K562 (cell line): ENCODE measurements at regions of chr22 and their contacts with region 1.

Region 1: GRCh38 chr22:32985899-32986765 is 72.0 kb downstream of the SYN3 start:
- DNase-seq: peak; percentile 67 to 70 (median 67)
- ATAC-seq: peak; percentile 99
- H3K4me3 ChIP-seq: no peak overlapping the region
- H3K27ac ChIP-seq: no peak overlapping the region
- H3K4me1 ChIP-seq: peaks cover 0 to 4% of the 10 kb centered on the region in 2 experiments; a peak in 1 of 5 replicates
- H3K27me3 ChIP-seq: no peaks in the 10 kb centered on the region
- CTCF ChIP-seq: peak; percentile 77 to 79 (median 78)
- EP300 ChIP-seq: no peak
- POLR2A ChIP-seq: no peak
- RAD21 ChIP-seq: peak; percentile 63 to 82

Region 2: GRCh38 chr22:32660292-32660691 is 325.8 kb before region 1 on chr22:
- CTCF ChIA-PET with region 1: no interaction called
- POLR2A ChIA-PET with region 1: no interaction called
- in situ Hi-C with region 1: loop called (anchors 10 kb)
- intact Hi-C with region 1: loop called (anchors 10 kb)
- DNase-seq: peak; percentile 63 to 69 (median 68)
- ATAC-seq: peak; percentile 88
- H3K4me3 ChIP-seq: no peak overlapping the region
- H3K27ac ChIP-seq: no peak overlapping the region
- H3K4me1 ChIP-seq: no peaks in the 10 kb centered on the region; a peak in 1 of 5 replicates
- H3K27me3 ChIP-seq: peaks cover 0 to 9% of the 10 kb centered on the region in 2 experiments; a peak in 4 of 5 replicates
- CTCF ChIP-seq: peak; percentile 76 to 80 (median 76)
- EP300 ChIP-seq: no peak
- POLR2A ChIP-seq: no peak
- RAD21 ChIP-seq: peak; percentile 82 to 86

Region 3: DNA sequence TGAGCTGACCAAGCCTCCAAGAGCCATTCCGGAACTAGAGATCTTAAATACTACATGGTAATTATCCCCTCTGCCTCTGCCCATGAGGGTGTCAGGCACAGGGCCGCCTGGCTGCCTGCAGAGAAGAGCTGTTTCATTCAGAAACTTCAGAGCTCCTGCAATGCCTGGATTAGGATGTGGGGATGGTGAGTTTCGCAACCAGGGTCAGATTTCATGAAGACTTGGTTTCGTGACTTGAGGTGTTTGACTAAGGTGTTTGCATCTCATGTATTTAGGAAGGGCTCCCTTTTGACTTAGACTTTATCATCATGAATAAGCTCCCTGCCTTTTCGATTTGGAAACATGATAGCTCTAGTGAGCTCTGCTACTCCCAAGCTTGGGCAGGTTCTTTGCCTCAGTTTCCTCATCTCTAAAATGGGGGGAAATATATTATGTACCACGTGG is 175.5 kb before region 1 on chr22:
- CTCF ChIA-PET with region 1: no interaction called
- POLR2A ChIA-PET with region 1: no interaction called
- in situ Hi-C with region 1: no loop called
- intact Hi-C with region 1: loop called (anchors 10 kb)
- DNase-seq: no peak
- ATAC-seq: no peak
- H3K4me3 ChIP-seq: no peak overlapping the region
- H3K27ac ChIP-seq: no peak overlapping the region
- H3K4me1 ChIP-seq: no peaks in the 10 kb centered on the region
- H3K27me3 ChIP-seq: peaks cover 0 to 5% of the 10 kb centered on the region in 2 experiments; a peak in 1 of 5 replicates
- CTCF ChIP-seq: no peak
- EP300 ChIP-seq: no peak
- POLR2A ChIP-seq: no peak
- RAD21 ChIP-seq: no peak

Region 4: GRCh38 chr22:32836280-32837123 is 149.6 kb before region 1 on chr22:
- CTCF ChIA-PET with region 1: no interaction called
- POLR2A ChIA-PET with region 1: interaction called, 3 read pairs
- in situ Hi-C with region 1: loop called (anchors 5 kb)
- intact Hi-C with region 1: no loop called
- DNase-seq: peak; percentile 20 to 54 (median 42)
- ATAC-seq: peak; percentile 55; the same call in 2 of the 3 replicates
- H3K4me3 ChIP-seq: no peak overlapping the region
- H3K27ac ChIP-seq: no peak overlapping the region
- H3K4me1 ChIP-seq: no peaks in the 10 kb centered on the region
- H3K27me3 ChIP-seq: no peaks in the 10 kb centered on the region; a peak in 1 of 5 replicates
- CTCF ChIP-seq: peak; percentile 30 to 60 (median 54); a peak in 5 of 6 replicates
- EP300 ChIP-seq: no peak
- POLR2A ChIP-seq: no peak
- RAD21 ChIP-seq: peak in 1 of 2 experiments; percentile 27; a peak in 2 of 4 replicates

Region 5: GRCh38 chr22:32926600-32926999 is 59.5 kb before region 1 on chr22:
- CTCF ChIA-PET with region 1: no interaction called
- POLR2A ChIA-PET with region 1: no interaction called
- in situ Hi-C with region 1: no loop called
- intact Hi-C with region 1: loop called (anchors 2 kb)
- DNase-seq: peak; percentile 19 to 48 (median 27)
- ATAC-seq: peak; percentile 69; the same call in 2 of the 3 replicates
- H3K4me3 ChIP-seq: no peak overlapping the region
- H3K27ac ChIP-seq: no peak overlapping the region
- H3K4me1 ChIP-seq: no peaks in the 10 kb centered on the region; a peak in 1 of 5 replicates
- H3K27me3 ChIP-seq: no peaks in the 10 kb centered on the region; a peak in 1 of 5 replicates
- CTCF ChIP-seq: peak; percentile 48 to 60 (median 57)
- EP300 ChIP-seq: no peak
- POLR2A ChIP-seq: no peak
- RAD21 ChIP-seq: peak; percentile 41 to 43

Region 6: DNA sequence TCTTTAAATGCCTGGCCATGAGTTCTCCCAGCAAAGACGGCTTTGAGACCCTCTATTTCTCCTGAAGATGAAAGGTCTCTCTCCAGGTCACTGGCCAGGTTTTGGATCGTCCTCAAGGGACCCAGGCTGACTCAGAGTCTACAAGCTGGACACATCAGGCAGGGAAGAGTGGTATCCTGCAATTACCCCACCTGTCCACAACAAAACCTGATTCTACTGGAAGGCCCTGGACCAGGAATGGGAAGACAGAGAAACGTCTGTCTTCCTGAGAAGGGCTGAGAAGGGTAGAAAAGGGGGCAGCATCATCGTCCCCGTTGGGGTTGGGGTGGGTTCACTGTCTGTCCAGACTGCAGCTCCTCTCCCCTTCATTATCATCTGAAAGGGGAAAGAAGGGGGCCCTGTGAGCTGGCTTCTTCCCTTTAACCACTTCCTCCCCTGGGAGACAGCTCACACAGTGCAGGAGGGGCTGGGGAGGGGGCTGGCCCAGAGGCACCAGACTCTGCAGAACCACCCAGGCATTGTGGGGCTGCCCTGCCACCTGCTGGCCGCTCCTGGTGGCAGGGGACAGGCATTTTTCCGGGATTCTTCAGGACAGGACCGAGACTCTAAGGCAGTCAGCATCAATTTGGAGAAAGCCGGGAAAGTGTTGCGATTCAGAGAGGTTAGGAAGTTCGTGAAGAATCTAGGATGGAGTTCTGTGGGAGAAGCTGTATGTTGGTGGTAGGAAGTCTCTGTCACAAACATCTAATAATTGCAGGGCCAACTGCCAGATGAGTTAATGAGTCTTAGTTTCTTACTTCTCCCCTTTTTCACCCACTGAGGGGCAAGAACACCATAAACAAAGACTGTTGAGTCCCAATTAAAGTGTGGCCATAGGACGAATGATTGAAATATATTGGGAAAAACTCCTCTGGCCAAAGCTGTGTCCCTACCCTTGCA is 14.5 kb after region 1 on chr22:
- CTCF ChIA-PET with region 1: no interaction called
- POLR2A ChIA-PET with region 1: no interaction called
- in situ Hi-C with region 1: no loop called
- intact Hi-C with region 1: no loop called
- DNase-seq: peak; percentile 37 to 56 (median 51)
- ATAC-seq: peak; percentile 91
- H3K4me3 ChIP-seq: no peak overlapping the region
- H3K27ac ChIP-seq: no peak overlapping the region
- H3K4me1 ChIP-seq: no peaks in the 10 kb centered on the region
- H3K27me3 ChIP-seq: peaks cover 0 to 8% of the 10 kb centered on the region in 2 experiments; a peak in 2 of 5 replicates
- CTCF ChIP-seq: peak; percentile 71 to 78 (median 75)
- EP300 ChIP-seq: no peak
- POLR2A ChIP-seq: no peak
- RAD21 ChIP-seq: peak; percentile 67 to 82

Region 7: DNA sequence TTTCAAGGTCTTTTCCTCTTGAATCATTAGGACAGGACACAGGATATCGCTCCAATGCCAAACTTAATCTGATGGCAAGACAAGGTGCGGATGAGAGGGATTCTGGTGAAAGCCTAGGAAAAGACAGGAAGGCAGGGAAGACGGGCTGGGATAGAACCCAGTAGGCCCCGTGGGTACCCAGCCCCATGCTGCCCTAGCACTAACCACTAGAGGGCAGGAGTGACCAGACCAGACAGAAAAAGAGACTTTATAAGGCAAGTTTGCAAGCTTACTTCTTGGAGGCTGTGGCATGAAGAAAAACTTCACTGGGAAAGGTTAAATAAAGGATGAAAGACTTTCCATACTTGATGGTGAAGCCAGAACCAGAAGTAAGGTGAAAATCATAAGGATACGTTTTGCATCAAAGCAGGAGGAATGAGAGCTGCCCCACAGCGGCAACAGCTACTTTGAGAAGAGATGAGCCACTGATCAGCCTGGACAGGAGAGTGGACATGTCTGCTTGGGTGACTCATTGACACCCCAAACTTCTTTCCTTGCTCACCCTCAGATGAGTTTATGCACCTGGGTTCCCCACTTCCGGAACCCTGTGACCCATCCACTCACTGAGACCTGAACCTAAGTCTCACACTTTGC is 32.2 kb after region 1 on chr22:
- CTCF ChIA-PET with region 1: no interaction called
- POLR2A ChIA-PET with region 1: no interaction called
- in situ Hi-C with region 1: no loop called
- intact Hi-C with region 1: no loop called
- DNase-seq: peak; percentile 45 to 60 (median 50)
- ATAC-seq: peak; percentile 87
- H3K4me3 ChIP-seq: no peak overlapping the region
- H3K27ac ChIP-seq: no peak overlapping the region
- H3K4me1 ChIP-seq: no peaks in the 10 kb centered on the region
- H3K27me3 ChIP-seq: 0 out of 5 replicates have a peak, but pooled peaks cover 0 to 2% of the 10 kb centered on the region in 2 experiments
- CTCF ChIP-seq: peak; percentile 66 to 78 (median 71)
- EP300 ChIP-seq: no peak
- POLR2A ChIP-seq: no peak
- RAD21 ChIP-seq: peak; percentile 13 to 61; a peak in 3 of 4 replicates

Region 8: DNA sequence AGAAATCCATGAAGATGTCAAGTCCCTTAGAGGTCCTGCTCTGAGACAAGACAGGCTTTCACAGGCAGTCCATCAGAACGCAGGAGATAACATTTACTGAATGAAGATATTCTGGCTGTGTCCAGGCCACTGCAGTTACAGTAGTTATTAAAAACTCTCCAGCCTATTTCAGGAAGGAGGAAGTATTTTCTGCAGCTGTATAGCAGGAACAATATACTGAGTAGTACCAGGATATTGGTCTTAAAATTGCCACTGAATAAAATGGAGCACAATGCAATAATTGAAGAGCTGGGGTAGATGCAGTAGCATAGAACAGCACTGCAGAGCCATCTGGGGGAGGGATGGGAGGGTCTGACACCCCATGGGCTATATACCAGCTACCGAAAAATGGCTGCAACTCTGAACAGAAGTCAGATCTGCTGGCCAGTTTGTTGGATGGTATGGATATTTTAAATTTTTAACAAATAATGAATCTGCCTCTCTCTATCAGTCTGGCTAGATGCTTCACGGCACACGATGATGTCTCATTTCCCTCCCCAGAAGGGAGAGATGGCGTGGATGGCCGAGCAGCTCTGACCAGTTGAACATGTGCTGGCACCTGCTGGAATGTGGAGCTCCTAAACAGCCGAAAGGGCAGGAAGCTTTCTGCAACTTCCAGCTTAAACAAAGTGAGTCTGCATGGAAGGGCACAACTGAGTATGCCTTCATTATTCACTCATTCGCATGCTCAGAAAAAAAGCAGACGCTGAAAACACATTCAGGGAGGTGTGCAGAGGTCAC is 414.1 kb after region 1 on chr22:
- CTCF ChIA-PET with region 1: no interaction called
- POLR2A ChIA-PET with region 1: no interaction called
- in situ Hi-C with region 1: no loop called
- intact Hi-C with region 1: no loop called
- DNase-seq: no peak
- ATAC-seq: no peak
- H3K4me3 ChIP-seq: no peak overlapping the region
- H3K27ac ChIP-seq: no peak overlapping the region
- H3K4me1 ChIP-seq: no peaks in the 10 kb centered on the region
- H3K27me3 ChIP-seq: no peaks in the 10 kb centered on the region
- CTCF ChIP-seq: no peak
- EP300 ChIP-seq: no peak
- POLR2A ChIP-seq: no peak
- RAD21 ChIP-seq: no peak